Activated B cell treated with CpG ODN at 0.5 μM for 24 hours (primary cell): ENCODE measurements at regions of chr4 and their contacts with region 1.

Region 1: GRCh38 chr4:85842540-85842939 is 367.6 kb downstream of the ARHGAP24 start:
- DNase-seq: no peak
- ATAC-seq: peak; percentile 90
- H3K4me3 Mint-ChIP-seq: peak overlapping the region; percentile 30
- H3K27ac Mint-ChIP-seq: peak overlapping the region; percentile 36
- H3K4me1 Mint-ChIP-seq: peaks cover 26% of the 10 kb centered on the region
- H3K27me3 Mint-ChIP-seq: no peaks in the 10 kb centered on the region
- CTCF ChIP-seq: no peak

Region 2: GRCh38 chr4:85778632-85779131 is 63.9 kb before region 1 on chr4:
- CTCF ChIA-PET with region 1: no interaction called
- POLR2A ChIA-PET with region 1: no interaction called
- intact Hi-C with region 1: loop called (anchors 1 kb)
- DNase-seq: no peak
- ATAC-seq: peak; percentile 61
- H3K4me3 Mint-ChIP-seq: peak overlapping the region; percentile 91
- H3K27ac Mint-ChIP-seq: peak overlapping the region; percentile 93
- H3K4me1 Mint-ChIP-seq: peaks cover 69% of the 10 kb centered on the region
- H3K27me3 Mint-ChIP-seq: no peaks in the 10 kb centered on the region
- CTCF ChIP-seq: no peak